ENCODE measurements at regions of chr7 and their contacts with region 1.

Region 1: GRCh38 chr7:152341039-152341913 is 94.5 kb downstream of the KMT2C start:
- DNase-seq: peak; percentile 21 to 43
- H3K4me3 ChIP-seq: no peak overlapping the region
- H3K27ac ChIP-seq: no peak overlapping the region
- H3K4me1 ChIP-seq: no peaks in the 10 kb centered on the region
- H3K27me3 ChIP-seq: no peaks in the 10 kb centered on the region
- CTCF ChIP-seq: peak; percentile 76

Region 2: GRCh38 chr7:151945224-151945623 is 396.1 kb before region 1 on chr7:
- CTCF ChIA-PET with region 1: no interaction called
- POLR2A ChIA-PET with region 1: no interaction called
- intact Hi-C with region 1: no loop called
- DNase-seq: no peak
- H3K4me3 ChIP-seq: no peak overlapping the region
- H3K27ac ChIP-seq: no peak overlapping the region
- H3K4me1 ChIP-seq: peaks cover 5% of the 10 kb centered on the region
- H3K27me3 ChIP-seq: peaks cover 67% of the 10 kb centered on the region
- CTCF ChIP-seq: no peak

Region 3: DNA sequence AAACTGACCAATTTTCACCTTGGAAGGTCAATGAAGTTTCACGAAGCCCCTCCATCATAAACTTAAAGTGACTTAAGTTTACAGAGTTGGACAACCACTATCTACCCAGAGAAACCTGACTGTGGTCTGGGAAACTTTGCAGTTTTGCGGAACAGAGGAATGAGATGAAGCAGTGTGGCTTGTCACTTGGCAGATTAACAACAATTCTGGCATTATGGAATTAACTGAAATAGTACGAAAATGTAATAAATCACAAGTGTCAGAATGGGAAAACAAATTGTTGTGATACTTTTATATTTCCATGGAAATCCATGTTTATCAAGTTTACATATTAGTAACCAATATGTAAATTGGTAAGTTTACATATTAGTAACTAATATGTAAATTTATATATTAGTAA is 89.6 kb after region 1 on chr7:
- CTCF ChIA-PET with region 1: no interaction called
- POLR2A ChIA-PET with region 1: no interaction called
- intact Hi-C with region 1: loop called (anchors 5 kb)
- DNase-seq: no peak
- H3K4me3 ChIP-seq: no peak overlapping the region
- H3K27ac ChIP-seq: no peak overlapping the region
- H3K4me1 ChIP-seq: peaks cover 26% of the 10 kb centered on the region
- H3K27me3 ChIP-seq: no peaks in the 10 kb centered on the region
- CTCF ChIP-seq: no peak

Region 4: DNA sequence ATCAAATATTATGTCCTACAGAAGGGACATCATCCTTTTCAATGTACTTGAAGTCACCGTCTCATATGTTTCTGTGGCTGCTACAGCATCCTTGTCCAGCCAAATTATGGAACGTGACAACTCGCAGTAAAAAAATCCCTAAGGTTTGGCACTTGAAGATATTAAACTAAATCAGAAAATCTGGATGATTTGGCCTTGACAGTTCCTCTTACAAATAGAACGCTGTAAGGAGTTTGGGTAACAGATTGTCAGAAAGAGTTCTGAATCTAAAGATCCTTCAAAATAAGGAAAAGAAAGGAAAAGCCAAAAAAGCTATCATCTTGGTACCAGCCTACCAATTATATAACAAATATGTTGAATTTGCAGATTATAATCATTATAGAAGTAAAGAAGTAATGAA is 313.7 kb after region 1 on chr7:
- CTCF ChIA-PET with region 1: no interaction called
- POLR2A ChIA-PET with region 1: no interaction called
- intact Hi-C with region 1: no loop called
- DNase-seq: no peak
- H3K4me3 ChIP-seq: no peak overlapping the region
- H3K27ac ChIP-seq: no peak overlapping the region
- H3K4me1 ChIP-seq: no peaks in the 10 kb centered on the region
- H3K27me3 ChIP-seq: no peaks in the 10 kb centered on the region
- CTCF ChIP-seq: no peak

Region 5: DNA sequence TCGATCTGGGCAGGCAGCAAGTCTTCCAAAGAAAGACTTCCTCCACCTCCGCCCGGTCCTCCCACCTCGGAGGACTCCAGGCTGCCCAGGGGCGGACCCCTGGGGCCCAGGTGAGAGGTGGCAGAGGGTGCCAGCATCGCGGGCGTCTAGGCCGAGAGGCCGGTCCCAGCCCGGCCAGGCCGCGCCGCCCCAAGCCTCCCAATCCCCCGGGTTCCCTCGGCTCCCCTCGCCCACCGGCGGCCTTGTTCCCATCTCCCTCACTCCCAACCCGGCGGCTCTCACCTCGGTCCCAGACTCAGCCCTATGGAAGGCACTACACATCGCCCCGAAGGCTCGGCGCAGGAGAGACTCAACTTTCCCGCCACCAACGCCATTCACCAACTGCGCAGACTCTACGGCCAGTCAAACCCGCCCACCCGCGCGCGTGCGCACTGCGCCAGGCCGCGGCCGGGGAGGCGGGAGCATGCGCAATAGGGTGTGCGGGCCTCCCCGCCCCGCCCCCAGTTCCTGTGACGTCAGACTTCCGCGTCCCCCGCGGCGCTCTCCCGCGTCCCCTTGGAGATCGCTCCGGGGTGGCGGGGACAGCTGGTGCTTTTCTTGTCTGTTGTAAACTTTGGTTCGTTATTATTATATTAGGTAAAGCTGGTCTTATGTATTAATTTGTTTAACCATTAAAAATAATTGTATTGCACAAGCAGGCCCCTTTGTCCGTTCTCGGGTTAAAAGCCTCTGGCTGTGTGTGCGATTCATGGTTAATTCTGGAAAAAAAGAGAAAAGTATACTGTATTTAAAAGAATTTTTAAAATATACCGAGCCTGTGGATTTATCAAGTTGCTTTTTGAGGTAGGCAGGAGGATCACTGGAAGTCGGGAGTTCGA is 334.7 kb after region 1 on chr7 and contains the start of gene XRCC2:
- CTCF ChIA-PET with region 1: no interaction called
- POLR2A ChIA-PET with region 1: no interaction called
- intact Hi-C with region 1: loop called (anchors 10 kb)
- DNase-seq: peak; percentile 76 to 97
- H3K4me3 ChIP-seq: peak within 1 kb of the TSS; percentile 93
- H3K27ac ChIP-seq: peak within 1 kb of the TSS; percentile 60
- H3K4me1 ChIP-seq: peaks cover 24% of the 10 kb centered on the region
- H3K27me3 ChIP-seq: no peaks in the 10 kb centered on the region
- CTCF ChIP-seq: no peak
- total RNA-seq, gene XRCC2: 21.2 and 25.0 TPM in 2 replicates

Region 6: DNA sequence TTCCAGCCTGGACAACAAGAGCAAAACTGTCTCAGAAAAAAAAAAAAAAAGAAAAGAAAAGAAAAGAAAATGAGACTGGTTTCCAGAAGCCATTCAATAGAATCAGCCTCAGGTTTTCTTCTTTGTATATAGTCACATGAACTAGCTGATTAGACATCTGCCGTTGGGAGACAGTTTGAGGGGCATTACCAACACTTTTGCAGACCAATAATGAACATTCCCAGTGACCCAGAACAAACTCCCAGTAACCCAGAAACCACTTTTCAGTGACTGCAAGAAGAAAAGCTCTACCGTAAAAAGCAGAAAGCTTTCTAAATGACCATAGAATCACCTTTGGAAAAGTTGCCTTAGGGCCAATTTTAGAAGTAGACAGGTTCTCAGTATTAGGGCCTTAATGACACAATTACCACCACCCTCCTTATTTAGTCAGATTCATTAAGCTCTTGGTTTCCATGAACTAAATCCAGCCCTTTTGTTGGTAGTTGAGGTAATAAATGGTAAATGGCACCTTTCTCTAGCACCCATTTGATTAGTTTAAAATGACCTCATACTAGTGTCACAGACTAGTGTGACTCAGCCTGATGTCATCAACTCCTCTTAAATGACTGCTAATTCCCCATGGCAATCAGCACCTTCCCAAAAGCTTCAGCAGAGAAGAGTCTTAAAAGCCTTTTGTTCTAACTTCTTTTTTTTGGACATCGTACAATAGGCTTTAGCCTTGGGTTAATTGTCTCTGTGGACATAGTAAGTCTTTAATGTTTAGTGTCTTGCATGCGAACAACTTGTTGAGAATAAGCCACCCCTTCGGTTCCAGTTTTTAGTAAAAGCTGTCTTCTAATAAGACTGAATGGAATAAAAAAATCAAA is 368.2 kb after region 1 on chr7:
- CTCF ChIA-PET with region 1: interaction called, 6 read pairs
- POLR2A ChIA-PET with region 1: no interaction called
- intact Hi-C with region 1: loop called (anchors 2 kb)
- DNase-seq: peak in 1 of 2 experiments; percentile 37
- H3K4me3 ChIP-seq: no peak overlapping the region
- H3K27ac ChIP-seq: no peak overlapping the region
- H3K4me1 ChIP-seq: peaks cover 18% of the 10 kb centered on the region
- H3K27me3 ChIP-seq: no peaks in the 10 kb centered on the region
- CTCF ChIP-seq: no peak